Activated CD4-positive, alpha-beta T cell treated with anti-CD3 and anti-CD28 coated beads for 36 hours (primary cell): ENCODE measurements at regions of chr11 and their contacts with region 1.

Region 1: GRCh38 chr11:5476184-5476819 is 12.2 kb upstream of the OR52D1 start:
- DNase-seq: peak; percentile 59
- ATAC-seq: peak; percentile 53
- H3K4me3 Mint-ChIP-seq: no peak overlapping the region
- H3K27ac Mint-ChIP-seq: no peak overlapping the region
- H3K4me1 Mint-ChIP-seq: no peaks in the 10 kb centered on the region
- H3K27me3 Mint-ChIP-seq: peaks cover 16% of the 10 kb centered on the region

Region 2: GRCh38 chr11:4962816-4963215 is 513.5 kb before region 1 on chr11:
- CTCF ChIA-PET with region 1: no interaction called
- POLR2A ChIA-PET with region 1: no interaction called
- intact Hi-C with region 1: no loop called
- DNase-seq: no peak
- ATAC-seq: no peak
- H3K4me3 Mint-ChIP-seq: no peak overlapping the region
- H3K27ac Mint-ChIP-seq: no peak overlapping the region
- H3K4me1 Mint-ChIP-seq: no peaks in the 10 kb centered on the region
- H3K27me3 Mint-ChIP-seq: peaks cover 4% of the 10 kb centered on the region

Region 3: DNA sequence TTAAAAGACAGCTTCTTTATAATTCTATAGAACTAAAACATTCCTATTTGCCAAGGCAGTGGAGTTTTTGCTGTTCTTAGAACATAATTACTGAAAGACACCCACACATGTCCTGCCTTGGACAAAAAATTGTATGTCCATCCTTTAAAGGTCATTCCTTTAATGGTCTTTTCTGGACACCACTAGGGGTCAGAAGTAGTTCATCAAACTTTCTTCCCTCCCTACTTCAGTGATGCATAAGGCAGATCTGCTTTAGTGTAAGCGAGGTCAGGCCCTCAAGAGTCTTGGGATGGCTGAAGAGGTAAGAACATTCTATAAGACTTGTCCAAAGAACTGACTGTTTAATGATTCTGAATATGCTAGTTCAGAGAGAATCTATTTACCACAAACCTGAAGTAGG is 271.5 kb before region 1 on chr11:
- CTCF ChIA-PET with region 1: no interaction called
- POLR2A ChIA-PET with region 1: no interaction called
- intact Hi-C with region 1: no loop called
- DNase-seq: no peak
- ATAC-seq: no peak
- H3K4me3 Mint-ChIP-seq: no peak overlapping the region
- H3K27ac Mint-ChIP-seq: no peak overlapping the region
- H3K4me1 Mint-ChIP-seq: no peaks in the 10 kb centered on the region
- H3K27me3 Mint-ChIP-seq: peaks cover 6% of the 10 kb centered on the region

Region 4: GRCh38 chr11:5550440-5551095 is 74.3 kb after region 1 on chr11:
- CTCF ChIA-PET with region 1: interaction called, 3 read pairs
- POLR2A ChIA-PET with region 1: no interaction called
- intact Hi-C with region 1: loop called in 1 of 2 experiments (anchors 1 kb)
- DNase-seq: no peak
- ATAC-seq: no peak
- H3K4me3 Mint-ChIP-seq: no peak overlapping the region
- H3K27ac Mint-ChIP-seq: no peak overlapping the region
- H3K4me1 Mint-ChIP-seq: no peaks in the 10 kb centered on the region
- H3K27me3 Mint-ChIP-seq: peaks cover 3% of the 10 kb centered on the region

Region 5: GRCh38 chr11:5671841-5672240 is 195.5 kb after region 1 on chr11:
- CTCF ChIA-PET with region 1: no interaction called
- POLR2A ChIA-PET with region 1: no interaction called
- intact Hi-C with region 1: no loop called
- DNase-seq: no peak
- ATAC-seq: no peak
- H3K4me3 Mint-ChIP-seq: no peak overlapping the region
- H3K27ac Mint-ChIP-seq: no peak overlapping the region
- H3K4me1 Mint-ChIP-seq: peaks cover 9% of the 10 kb centered on the region
- H3K27me3 Mint-ChIP-seq: no peaks in the 10 kb centered on the region

Region 6: DNA sequence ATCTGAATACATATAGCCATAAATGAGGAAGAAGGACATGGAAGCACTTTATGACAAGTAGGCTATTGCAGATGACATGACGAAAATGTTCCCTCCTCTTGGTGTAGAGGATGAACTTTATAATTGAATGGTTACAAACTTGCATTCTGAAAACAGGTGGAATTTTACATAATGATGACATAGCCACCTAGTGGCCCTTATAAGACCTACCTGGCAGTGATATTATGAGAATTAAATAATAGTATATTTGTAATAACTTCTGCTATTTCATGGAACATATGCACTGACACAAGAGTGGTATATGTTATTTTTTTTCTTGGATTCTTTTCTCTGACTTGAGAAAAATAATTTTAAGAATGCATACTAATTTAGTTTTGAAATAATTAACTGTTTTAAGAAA is 236.2 kb after region 1 on chr11:
- CTCF ChIA-PET with region 1: no interaction called
- POLR2A ChIA-PET with region 1: no interaction called
- intact Hi-C with region 1: loop called in 1 of 2 experiments (anchors 5 kb)
- DNase-seq: no peak
- ATAC-seq: peak; percentile 49
- H3K4me3 Mint-ChIP-seq: no peak overlapping the region
- H3K27ac Mint-ChIP-seq: no peak overlapping the region
- H3K4me1 Mint-ChIP-seq: peaks cover 3% of the 10 kb centered on the region
- H3K27me3 Mint-ChIP-seq: no peaks in the 10 kb centered on the region

Region 7: GRCh38 chr11:5808500-5809121 is 332.3 kb after region 1 on chr11 and contains the start of gene OR52N2:
- CTCF ChIA-PET with region 1: interaction called, 17 read pairs
- POLR2A ChIA-PET with region 1: no interaction called
- intact Hi-C with region 1: loop called (anchors 1 kb)
- DNase-seq: peak; percentile 82
- ATAC-seq: peak; percentile 92
- H3K4me3 Mint-ChIP-seq: peak within 1 kb of the TSS; percentile 79
- H3K27ac Mint-ChIP-seq: peak within 1 kb of the TSS; percentile 23
- H3K4me1 Mint-ChIP-seq: peaks cover 8% of the 10 kb centered on the region
- H3K27me3 Mint-ChIP-seq: peaks cover 16% of the 10 kb centered on the region
- total RNA-seq, gene OR52N2: not detected

Region 8: GRCh38 chr11:5891216-5891800 is 415.0 kb after region 1 on chr11:
- CTCF ChIA-PET with region 1: interaction called, 4 read pairs
- POLR2A ChIA-PET with region 1: no interaction called
- intact Hi-C with region 1: loop called (anchors 1 to 5 kb)
- DNase-seq: no peak
- ATAC-seq: no peak
- H3K4me3 Mint-ChIP-seq: no peak overlapping the region
- H3K27ac Mint-ChIP-seq: no peak overlapping the region
- H3K4me1 Mint-ChIP-seq: no peaks in the 10 kb centered on the region
- H3K27me3 Mint-ChIP-seq: peaks cover 5% of the 10 kb centered on the region